ENCODE measurements at regions of chr10 and their contacts with region 1.

Region 1: DNA sequence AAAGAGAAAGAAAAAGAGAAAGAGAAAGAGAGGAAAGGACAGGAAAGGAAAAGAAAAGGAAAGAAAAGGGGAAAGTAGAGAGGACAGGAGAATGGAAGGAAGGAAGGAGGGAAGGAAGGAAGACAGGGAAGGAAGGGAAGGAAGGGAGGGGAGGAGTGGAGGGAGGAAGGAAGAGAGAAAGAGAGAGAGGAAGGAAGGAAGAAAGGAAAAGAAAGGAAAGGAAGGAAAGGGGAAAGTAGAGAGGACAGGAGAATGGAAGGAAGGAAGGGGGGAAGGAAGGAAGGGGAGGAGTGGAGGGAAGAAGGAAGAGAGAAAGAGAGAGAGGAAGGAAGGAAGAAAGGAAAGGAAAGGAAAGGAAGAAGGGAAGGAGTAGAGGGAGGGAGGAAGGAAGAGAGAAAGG is 96.4 kb upstream of the APBB1IP start:
- DNase-seq: no peak
- ATAC-seq: no peak
- H3K4me3 ChIP-seq: no peak overlapping the region
- H3K27ac ChIP-seq: no peak overlapping the region
- H3K4me1 ChIP-seq: no peaks in the 10 kb centered on the region
- H3K27me3 ChIP-seq: no peaks in the 10 kb centered on the region
- CTCF ChIP-seq: no peak
- POLR2A ChIP-seq: no peak

Region 2: DNA sequence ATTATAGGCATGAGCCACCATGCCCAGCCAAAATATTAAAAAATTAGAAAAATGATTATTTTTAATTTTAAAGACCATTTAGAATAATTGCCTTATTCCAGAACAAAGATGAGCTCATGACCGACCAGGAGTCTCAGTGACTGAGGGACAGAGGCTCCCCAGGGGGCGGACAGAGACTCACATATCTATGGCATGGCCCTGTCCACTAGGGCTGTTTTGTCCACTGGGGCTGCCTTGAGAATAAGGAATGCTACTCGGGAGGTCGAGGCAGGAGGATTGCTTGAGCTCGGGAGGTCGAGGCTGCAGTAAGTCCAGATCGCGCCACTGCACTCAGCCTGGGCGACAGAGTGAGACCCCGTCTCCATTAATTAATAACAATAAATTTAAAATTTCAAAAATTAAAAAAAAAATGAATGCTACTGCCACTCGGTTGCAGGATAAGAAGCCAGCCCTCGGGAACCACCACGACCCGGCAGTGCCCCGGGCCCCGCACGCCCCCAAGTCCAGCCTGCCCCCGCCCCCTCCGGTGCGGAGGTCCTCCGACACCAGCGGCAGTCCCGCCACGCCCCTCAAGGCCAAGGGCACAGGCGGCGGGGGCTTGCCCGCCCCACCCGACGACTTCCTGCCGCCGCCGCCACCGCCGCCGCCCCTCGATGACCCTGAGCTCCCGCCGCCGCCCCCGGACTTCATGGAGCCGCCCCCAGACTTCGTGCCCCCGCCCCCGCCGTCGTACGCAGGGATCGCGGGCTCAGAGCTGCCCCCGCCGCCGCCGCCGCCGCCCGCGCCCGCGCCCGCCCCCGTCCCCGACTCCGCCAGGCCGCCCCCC is 225.0 kb after region 1 on chr10:
- intact Hi-C with region 1: loop called (anchors 10 kb)
- DNase-seq: peak in 2 of 4 donors; percentile 12 to 38
- ATAC-seq: peak; percentile 24
- H3K4me3 ChIP-seq: peak overlapping the region in 1 of 2 donors; percentile 20
- H3K27ac ChIP-seq: no peak overlapping the region
- H3K4me1 ChIP-seq: no peaks in the 10 kb centered on the region
- H3K27me3 ChIP-seq: no peaks in the 10 kb centered on the region
- CTCF ChIP-seq: no peak
- POLR2A ChIP-seq: no peak